ENCODE measurements at regions of chr3 and their contacts with region 1.

Region 1: GRCh38 chr3:128879125-128879969 is at the start of gene ACAD9:
- DNase-seq: peak; percentile 95 to 98 (median 96)
- ATAC-seq: peak; percentile 90 to 91
- H3K4me3 Mint-ChIP-seq: peak within 1 kb of the TSS; percentile 85 to 95 (median 93)
- H3K27ac Mint-ChIP-seq: peak within 1 kb of the TSS; percentile 93 to 99 (median 98)
- H3K4me1 Mint-ChIP-seq: peaks cover 39 to 84% (median 79%) of the 10 kb centered on the region in 4 donors
- H3K27me3 Mint-ChIP-seq: peaks cover 0 to 5% (median 0%) of the 10 kb centered on the region in 5 donors
- polyA plus RNA-seq, gene ACAD9: 14.0 to 20.4 (median 16.5) TPM

Region 2: DNA sequence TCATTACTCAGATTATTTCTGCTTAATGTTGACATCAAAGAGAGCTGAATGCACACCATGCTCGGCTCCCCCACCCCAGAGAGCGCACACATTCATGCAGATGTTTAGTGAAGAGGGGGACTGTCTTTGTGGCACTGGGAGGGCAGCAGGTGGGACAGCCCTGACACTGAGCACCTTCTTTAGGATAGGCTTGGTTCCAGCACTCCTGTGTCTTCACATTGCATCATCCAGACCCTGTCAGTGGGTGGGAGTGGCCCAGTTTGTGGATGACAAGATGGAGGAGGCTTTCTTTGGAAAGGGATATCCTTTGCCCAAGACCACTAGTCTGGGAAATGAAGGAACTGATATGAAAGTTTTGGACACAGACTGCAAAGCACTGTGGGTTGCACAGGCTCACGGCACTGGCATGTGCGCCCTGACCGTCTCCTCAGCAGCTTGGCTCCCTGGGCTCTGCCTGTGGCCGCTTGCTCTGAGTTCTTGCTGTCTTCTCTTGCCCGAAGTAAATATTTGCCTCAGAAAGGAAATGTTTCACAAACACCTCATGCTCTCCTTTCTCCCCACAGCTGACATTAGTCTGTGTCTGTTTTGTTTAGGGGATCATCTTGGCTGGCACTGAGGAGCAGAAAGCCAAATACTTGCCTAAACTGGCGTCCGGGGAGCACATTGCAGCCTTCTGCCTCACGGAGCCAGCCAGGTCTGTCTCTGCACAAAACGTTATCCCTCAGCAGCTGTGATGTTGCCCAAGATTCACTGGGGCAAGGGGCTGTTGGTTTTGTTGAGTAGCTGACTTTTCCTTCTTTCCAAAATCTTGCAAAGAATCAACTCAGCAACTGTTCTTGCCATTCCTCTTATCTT is 16.7 kb after region 1 on chr3:
- POLR2A ChIA-PET with region 1: no interaction called
- DNase-seq: no peak
- ATAC-seq: no peak
- H3K4me3 Mint-ChIP-seq: no peak overlapping the region
- H3K27ac Mint-ChIP-seq: peak overlapping the region in 3 of 10 donors; percentile 22 to 63 (median 46)
- H3K4me1 Mint-ChIP-seq: peaks cover 0 to 4% (median 2%) of the 10 kb centered on the region in 4 donors
- H3K27me3 Mint-ChIP-seq: no peaks in the 10 kb centered on the region

Region 3: GRCh38 chr3:128922804-128923459 is 43.6 kb after region 1 on chr3:
- POLR2A ChIA-PET with region 1: interaction called, 29 read pairs
- DNase-seq: peak in 9 of 10 donors; percentile 35 to 77 (median 63)
- ATAC-seq: peak; percentile 86 to 87
- H3K4me3 Mint-ChIP-seq: peak overlapping the region; percentile 73 to 91 (median 86)
- H3K27ac Mint-ChIP-seq: peak overlapping the region; percentile 88 to 98 (median 92)
- H3K4me1 Mint-ChIP-seq: peaks cover 28 to 54% (median 41%) of the 10 kb centered on the region in 4 donors
- H3K27me3 Mint-ChIP-seq: no peaks in the 10 kb centered on the region

Region 4: DNA sequence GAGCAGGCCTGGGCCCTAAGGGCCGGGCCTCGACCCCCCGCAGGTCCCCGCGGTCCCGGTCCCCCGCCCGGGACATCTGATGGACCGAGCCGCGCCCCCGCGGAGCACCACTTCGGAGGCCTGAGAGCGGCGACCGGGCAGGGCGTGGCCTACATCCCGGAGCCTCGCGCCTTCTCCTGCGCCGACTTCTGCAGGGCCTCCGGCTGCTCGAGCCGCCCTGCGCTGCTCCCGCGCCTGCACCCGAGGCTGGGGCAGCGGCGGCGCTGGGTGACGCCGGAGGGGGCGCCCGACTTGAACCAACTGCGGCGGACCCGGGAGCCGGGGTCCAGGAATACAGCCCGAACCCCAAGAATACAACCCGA is 166.3 kb after region 1 on chr3:
- POLR2A ChIA-PET with region 1: no interaction called
- DNase-seq: peak in 5 of 10 donors; percentile 38 to 45 (median 44)
- ATAC-seq: peak; percentile 87 to 95
- H3K4me3 Mint-ChIP-seq: peak overlapping the region in 9 of 10 donors; percentile 37 to 74 (median 66)
- H3K27ac Mint-ChIP-seq: peak overlapping the region in 1 of 10 donors; percentile 74
- H3K4me1 Mint-ChIP-seq: peaks cover 0 to 2% (median under 1%) of the 10 kb centered on the region in 4 donors
- H3K27me3 Mint-ChIP-seq: peaks cover 0 to 21% (median 0%) of the 10 kb centered on the region in 5 donors